H1 (cell line): ENCODE measurements at regions of chr2 and their contacts with region 1.

Region 1: DNA sequence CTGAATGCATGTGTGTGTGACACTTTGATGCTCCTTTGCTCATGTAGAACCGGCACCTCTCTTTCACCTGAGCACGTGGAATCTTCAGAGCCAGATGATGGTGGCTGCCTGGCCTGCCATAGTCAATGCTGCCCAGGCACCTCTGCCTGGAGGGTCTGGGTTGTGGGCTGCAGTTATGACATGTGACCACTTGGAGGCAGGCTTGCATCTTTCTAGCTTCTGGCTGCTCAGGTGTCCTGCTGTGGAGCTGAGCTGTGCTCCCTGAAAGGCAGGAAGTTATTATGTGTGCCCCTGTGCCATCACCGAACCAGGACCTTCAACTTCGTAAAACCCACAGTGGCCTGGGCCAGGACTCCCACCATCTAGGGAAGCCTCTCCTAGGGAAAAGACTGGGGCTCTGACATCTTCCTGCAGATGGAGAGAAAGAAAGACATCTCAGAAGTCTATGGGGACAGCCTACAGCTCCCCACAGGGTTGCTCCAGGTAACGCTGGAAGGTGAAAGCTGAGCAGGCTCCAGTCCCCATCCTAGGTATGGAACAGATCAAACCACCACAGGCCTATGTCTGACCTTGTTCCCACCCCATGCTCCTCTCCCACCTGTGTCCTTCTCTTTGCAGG is 30.2 kb downstream of the PSD4 start:
- DNase-seq: peak; percentile 47 to 91
- H3K4me3 ChIP-seq: no peak overlapping the region
- H3K27ac ChIP-seq: no peak overlapping the region
- H3K4me1 ChIP-seq: no peaks in the 10 kb centered on the region; a peak in 1 of 7 replicates
- H3K27me3 ChIP-seq: no peaks in the 10 kb centered on the region
- CTCF ChIP-seq: peak; percentile 92 to 98 (median 93)
- EP300 ChIP-seq: no peak
- POLR2A ChIP-seq: no peak
- RAD21 ChIP-seq: peak; percentile 95 to 97

Region 2: GRCh38 chr2:113173542-113174395 is 30.2 kb before region 1 on chr2 and contains the start of gene PSD4:
- CTCF ChIA-PET with region 1: interaction called, 22 read pairs
- POLR2A ChIA-PET with region 1: no interaction called
- DNase-seq: no peak
- H3K4me3 ChIP-seq: no peak within 1 kb of the TSS
- H3K27ac ChIP-seq: no peak within 1 kb of the TSS
- H3K4me1 ChIP-seq: peaks cover 0 to 3% (median 0%) of the 10 kb centered on the region in 4 experiments; a peak in 3 of 7 replicates
- H3K27me3 ChIP-seq: no peaks in the 10 kb centered on the region
- CTCF ChIP-seq: no peak
- EP300 ChIP-seq: no peak
- POLR2A ChIP-seq: no peak
- RAD21 ChIP-seq: no peak
- total RNA-seq, gene PSD4: 1.2 and 1.3 TPM in 2 replicates

Region 3: DNA sequence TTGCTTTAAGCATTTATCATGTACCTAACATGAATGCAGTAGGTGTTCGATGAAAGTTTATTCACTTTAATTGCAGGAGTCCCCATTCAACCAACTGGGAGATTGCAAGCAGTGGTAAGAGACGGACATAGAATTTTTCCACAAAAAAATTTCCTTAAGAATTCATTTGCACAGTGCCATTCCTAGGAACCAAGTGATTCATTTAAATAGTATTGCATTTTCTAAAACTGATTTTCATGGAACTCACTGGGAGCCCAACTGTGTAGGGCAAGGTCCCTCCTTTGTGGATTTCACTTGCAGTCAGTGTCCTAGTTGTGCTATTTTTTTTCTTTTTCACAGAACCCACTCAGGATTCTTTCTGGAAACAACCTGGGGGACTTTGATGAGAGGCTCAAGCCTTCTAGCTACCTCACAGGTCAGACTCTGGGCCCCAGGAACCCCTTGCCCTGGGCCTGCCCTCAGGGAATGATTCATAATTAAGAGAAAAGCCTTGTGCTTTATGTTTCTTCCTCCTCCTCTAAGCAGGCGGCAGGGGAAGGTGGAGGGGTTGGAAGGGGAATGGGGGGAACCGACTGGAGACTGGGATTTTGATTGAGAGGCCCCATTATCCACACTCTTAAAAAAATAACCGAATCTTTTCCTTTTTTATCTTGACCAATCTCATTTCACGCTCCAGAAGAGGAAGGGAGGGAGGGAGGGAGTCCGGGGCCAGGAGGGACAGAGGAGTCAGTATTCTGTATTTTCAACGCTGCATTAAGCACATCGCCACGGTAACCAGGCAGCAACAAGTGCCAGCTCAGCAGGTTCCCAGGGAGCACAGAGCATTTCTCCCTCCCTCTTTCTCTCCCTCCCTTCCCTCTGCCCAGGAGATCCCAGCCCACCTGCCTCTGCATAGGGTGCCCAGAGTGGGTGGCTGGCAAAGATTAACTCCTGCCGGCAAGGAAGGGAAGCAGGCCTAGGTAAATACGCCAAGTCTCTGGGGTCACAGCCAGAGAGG is 21.6 kb after region 1 on chr2:
- CTCF ChIA-PET with region 1: interaction called, 28 read pairs
- POLR2A ChIA-PET with region 1: interaction called, 3 read pairs
- DNase-seq: no peak
- H3K4me3 ChIP-seq: no peak overlapping the region; a peak in 1 of 8 replicates
- H3K27ac ChIP-seq: no peak overlapping the region
- H3K4me1 ChIP-seq: peaks cover 0 to 6% (median 3%) of the 10 kb centered on the region in 4 experiments; a peak in 4 of 7 replicates
- H3K27me3 ChIP-seq: no peaks in the 10 kb centered on the region
- CTCF ChIP-seq: no peak
- EP300 ChIP-seq: no peak
- POLR2A ChIP-seq: no peak
- RAD21 ChIP-seq: no peak

Region 4: GRCh38 chr2:113248997-113249770 is 45.2 kb after region 1 on chr2:
- CTCF ChIA-PET with region 1: interaction called, 145 read pairs
- POLR2A ChIA-PET with region 1: no interaction called
- DNase-seq: peak; percentile 43 to 85
- H3K4me3 ChIP-seq: no peak overlapping the region
- H3K27ac ChIP-seq: no peak overlapping the region
- H3K4me1 ChIP-seq: 0 out of 7 replicates have a peak, but pooled peaks cover 0 to 1% (median 0%) of the 10 kb centered on the region in 4 experiments
- H3K27me3 ChIP-seq: no peaks in the 10 kb centered on the region
- CTCF ChIP-seq: peak; percentile 75 to 95 (median 87)
- EP300 ChIP-seq: no peak
- POLR2A ChIP-seq: no peak
- RAD21 ChIP-seq: peak; percentile 92 to 95

Region 5: GRCh38 chr2:113298176-113298575 is 94.2 kb after region 1 on chr2:
- CTCF ChIA-PET with region 1: interaction called, 17 read pairs
- POLR2A ChIA-PET with region 1: no interaction called
- DNase-seq: no peak
- H3K4me3 ChIP-seq: no peak overlapping the region
- H3K27ac ChIP-seq: no peak overlapping the region
- H3K4me1 ChIP-seq: no peaks in the 10 kb centered on the region
- H3K27me3 ChIP-seq: peaks cover 0 to 7% (median 2%) of the 10 kb centered on the region in 4 experiments; a peak in 4 of 7 replicates
- CTCF ChIP-seq: no peak
- EP300 ChIP-seq: no peak
- POLR2A ChIP-seq: no peak
- RAD21 ChIP-seq: no peak